Activated CD4-positive, alpha-beta T cell treated with anti-CD3 and anti-CD28 coated beads for 36 hours (primary cell): ENCODE measurements at regions of chr7 and their contacts with region 1.

Region 1: GRCh38 chr7:17255926-17256325 is 42.5 kb upstream of the AHR start:
- DNase-seq: no peak
- ATAC-seq: no peak
- H3K4me3 Mint-ChIP-seq: no peak overlapping the region
- H3K27ac Mint-ChIP-seq: no peak overlapping the region
- H3K4me1 Mint-ChIP-seq: peaks cover 18% of the 10 kb centered on the region
- H3K27me3 Mint-ChIP-seq: no peaks in the 10 kb centered on the region

Region 2: GRCh38 chr7:17139081-17139480 is 116.8 kb before region 1 on chr7:
- CTCF ChIA-PET with region 1: no interaction called
- POLR2A ChIA-PET with region 1: no interaction called
- intact Hi-C with region 1: loop called (anchors 1 to 2 kb)
- DNase-seq: no peak
- ATAC-seq: peak; percentile 83
- H3K4me3 Mint-ChIP-seq: no peak overlapping the region
- H3K27ac Mint-ChIP-seq: peak overlapping the region; percentile 91
- H3K4me1 Mint-ChIP-seq: peaks cover 74% of the 10 kb centered on the region
- H3K27me3 Mint-ChIP-seq: no peaks in the 10 kb centered on the region

Region 3: DNA sequence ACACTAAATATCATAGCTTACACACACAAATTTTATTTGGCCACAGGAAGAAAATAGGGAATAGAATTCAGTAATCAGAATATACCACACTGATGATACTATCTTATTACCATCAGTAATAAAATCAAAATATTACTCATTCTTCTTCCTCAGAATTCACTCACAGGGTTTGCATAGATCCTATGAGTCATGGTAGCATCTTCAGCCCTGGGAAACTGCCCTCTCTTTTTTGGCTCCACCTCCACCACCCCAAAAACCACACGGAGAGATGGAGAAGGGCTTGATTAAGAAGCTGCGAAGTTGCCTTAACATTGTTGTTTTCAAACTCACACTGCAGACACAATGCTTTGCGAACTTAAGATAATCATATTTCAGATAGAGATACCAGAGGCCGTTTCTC is 111.6 kb before region 1 on chr7:
- CTCF ChIA-PET with region 1: no interaction called
- POLR2A ChIA-PET with region 1: no interaction called
- intact Hi-C with region 1: loop called (anchors 1 to 2 kb)
- DNase-seq: peak; percentile 79
- ATAC-seq: peak; percentile 88
- H3K4me3 Mint-ChIP-seq: peak overlapping the region; percentile 53
- H3K27ac Mint-ChIP-seq: peak overlapping the region; percentile 83
- H3K4me1 Mint-ChIP-seq: peaks cover 51% of the 10 kb centered on the region
- H3K27me3 Mint-ChIP-seq: peaks cover 2% of the 10 kb centered on the region

Region 4: DNA sequence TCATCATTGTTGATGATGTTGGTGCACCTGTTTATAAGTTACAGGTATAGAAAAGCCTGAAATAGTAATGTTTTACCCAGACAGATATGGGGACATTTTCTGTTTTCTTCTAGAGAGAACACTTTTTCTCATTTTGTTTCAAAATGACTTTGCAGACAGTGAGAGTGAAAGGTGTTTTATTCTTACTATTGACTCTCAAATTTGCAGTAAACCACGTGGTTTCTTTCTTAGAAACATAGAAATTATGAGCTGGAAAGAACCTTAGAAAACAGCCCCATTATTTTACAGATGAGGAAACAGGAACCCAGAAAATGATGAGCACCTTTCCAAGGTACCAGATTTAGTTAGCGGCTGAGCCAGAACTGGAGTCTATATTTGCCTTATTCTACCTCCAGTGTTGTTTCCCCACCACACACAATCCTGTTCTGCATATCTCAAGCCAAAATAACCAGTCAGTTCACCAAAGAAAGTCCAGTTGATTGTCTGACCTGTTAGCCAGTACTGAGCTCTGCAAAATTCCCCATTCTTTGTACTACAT is 96.4 kb before region 1 on chr7:
- CTCF ChIA-PET with region 1: no interaction called
- POLR2A ChIA-PET with region 1: no interaction called
- intact Hi-C with region 1: loop called (anchors 1 kb)
- DNase-seq: peak; percentile 24
- ATAC-seq: peak; percentile 90
- H3K4me3 Mint-ChIP-seq: peak overlapping the region; percentile 0
- H3K27ac Mint-ChIP-seq: peak overlapping the region; percentile 55
- H3K4me1 Mint-ChIP-seq: peaks cover 40% of the 10 kb centered on the region
- H3K27me3 Mint-ChIP-seq: peaks cover 4% of the 10 kb centered on the region

Region 5: DNA sequence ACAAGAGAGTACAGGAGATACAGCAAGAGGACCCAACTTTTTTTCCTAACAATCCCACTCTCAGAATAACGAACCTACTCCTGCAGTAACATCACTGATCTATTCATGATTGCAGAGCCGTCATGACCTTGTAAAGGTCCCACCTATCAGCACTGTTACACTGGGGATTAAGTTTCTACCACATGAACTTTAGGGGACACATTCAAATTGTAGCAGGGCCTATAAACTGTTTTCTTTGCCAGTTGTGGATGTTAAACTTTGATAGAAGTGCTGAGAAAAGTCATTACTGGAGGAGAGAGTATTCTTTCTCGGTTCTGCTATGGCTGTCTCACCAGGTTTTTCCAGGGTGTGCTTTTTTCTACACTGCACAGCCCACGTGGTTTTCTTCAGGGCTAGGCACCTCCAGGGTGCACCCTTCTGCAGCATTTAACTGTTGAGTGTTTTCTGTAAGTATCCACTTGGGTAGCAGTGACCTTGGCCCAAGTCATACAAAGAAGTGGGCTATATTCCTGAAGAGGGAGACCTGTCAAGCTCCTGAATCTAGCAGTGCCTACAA is 89.0 kb before region 1 on chr7:
- CTCF ChIA-PET with region 1: no interaction called
- POLR2A ChIA-PET with region 1: no interaction called
- intact Hi-C with region 1: loop called in 1 of 2 experiments (anchors 1 kb)
- DNase-seq: peak; percentile 65
- ATAC-seq: peak; percentile 94
- H3K4me3 Mint-ChIP-seq: no peak overlapping the region
- H3K27ac Mint-ChIP-seq: peak overlapping the region; percentile 20
- H3K4me1 Mint-ChIP-seq: peaks cover 36% of the 10 kb centered on the region
- H3K27me3 Mint-ChIP-seq: no peaks in the 10 kb centered on the region

Region 6: GRCh38 chr7:17275749-17276671 is 20.1 kb after region 1 on chr7:
- CTCF ChIA-PET with region 1: no interaction called
- POLR2A ChIA-PET with region 1: interaction called, 5 read pairs
- intact Hi-C with region 1: loop called in 1 of 2 experiments (anchors 1 kb)
- DNase-seq: no peak
- ATAC-seq: no peak
- H3K4me3 Mint-ChIP-seq: no peak overlapping the region
- H3K27ac Mint-ChIP-seq: no peak overlapping the region
- H3K4me1 Mint-ChIP-seq: peaks cover 21% of the 10 kb centered on the region
- H3K27me3 Mint-ChIP-seq: no peaks in the 10 kb centered on the region

Region 7: GRCh38 chr7:17304926-17305325 is 49.0 kb after region 1 on chr7:
- CTCF ChIA-PET with region 1: no interaction called
- POLR2A ChIA-PET with region 1: interaction called, 4 read pairs
- intact Hi-C with region 1: loop called (anchors 1 kb)
- DNase-seq: peak; percentile 37
- ATAC-seq: peak; percentile 74
- H3K4me3 Mint-ChIP-seq: peak overlapping the region; percentile 58
- H3K27ac Mint-ChIP-seq: peak overlapping the region; percentile 86
- H3K4me1 Mint-ChIP-seq: peaks cover 31% of the 10 kb centered on the region
- H3K27me3 Mint-ChIP-seq: no peaks in the 10 kb centered on the region

Region 8: GRCh38 chr7:17706734-17707133 is 450.8 kb after region 1 on chr7:
- CTCF ChIA-PET with region 1: no interaction called
- POLR2A ChIA-PET with region 1: no interaction called
- intact Hi-C with region 1: no loop called
- DNase-seq: peak; percentile 55
- ATAC-seq: peak; percentile 71
- H3K4me3 Mint-ChIP-seq: no peak overlapping the region
- H3K27ac Mint-ChIP-seq: no peak overlapping the region
- H3K4me1 Mint-ChIP-seq: no peaks in the 10 kb centered on the region
- H3K27me3 Mint-ChIP-seq: peaks cover under 1% of the 10 kb centered on the region